ENCODE measurements at regions of chr10 and their contacts with region 1.

Region 1: DNA sequence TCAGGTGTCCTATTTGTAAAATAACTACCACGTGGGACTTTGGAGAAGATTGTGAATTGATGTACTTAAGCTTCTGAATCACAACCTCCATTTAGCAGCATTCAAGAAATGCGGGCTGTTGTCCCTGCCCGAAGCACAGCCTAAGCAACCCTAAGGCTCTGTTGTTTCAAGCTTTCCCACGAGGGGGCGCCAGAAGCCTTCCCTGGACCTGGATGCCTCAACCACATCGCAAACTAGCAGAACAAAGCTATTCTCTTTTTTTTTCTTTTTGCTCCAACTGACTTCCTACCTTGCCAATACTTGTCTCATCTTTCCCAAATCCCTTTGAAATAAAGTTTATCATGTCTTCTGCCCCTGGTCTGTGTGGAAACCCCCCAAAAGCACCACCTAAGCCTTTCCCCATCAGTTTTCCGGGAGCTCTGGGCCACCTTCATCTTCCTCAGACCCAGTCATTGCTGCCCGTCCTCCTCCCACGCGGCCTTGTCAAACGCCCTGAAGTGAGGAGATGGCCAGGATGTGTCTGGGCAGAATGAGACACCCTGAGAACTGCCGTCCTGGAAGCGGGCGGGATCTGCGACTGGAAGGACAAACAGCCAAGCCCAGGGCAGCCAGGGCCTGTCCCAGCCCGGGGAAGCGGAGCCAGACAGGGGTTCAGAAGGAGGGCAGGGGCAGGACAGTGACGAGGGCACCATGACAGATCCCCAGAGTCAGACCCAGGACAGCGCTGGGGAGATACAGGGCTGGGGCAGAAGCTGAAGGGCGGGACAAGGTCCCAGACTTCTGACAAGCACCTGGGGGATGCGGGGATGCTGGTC is 112.7 kb downstream of the SLIT1 start:
- DNase-seq: peak; percentile 65
- H3K4me3 Mint-ChIP-seq: no peak overlapping the region
- H3K27ac Mint-ChIP-seq: no peak overlapping the region
- H3K4me1 Mint-ChIP-seq: peaks cover 6% of the 10 kb centered on the region
- H3K27me3 Mint-ChIP-seq: peaks cover 11% of the 10 kb centered on the region

Region 2: DNA sequence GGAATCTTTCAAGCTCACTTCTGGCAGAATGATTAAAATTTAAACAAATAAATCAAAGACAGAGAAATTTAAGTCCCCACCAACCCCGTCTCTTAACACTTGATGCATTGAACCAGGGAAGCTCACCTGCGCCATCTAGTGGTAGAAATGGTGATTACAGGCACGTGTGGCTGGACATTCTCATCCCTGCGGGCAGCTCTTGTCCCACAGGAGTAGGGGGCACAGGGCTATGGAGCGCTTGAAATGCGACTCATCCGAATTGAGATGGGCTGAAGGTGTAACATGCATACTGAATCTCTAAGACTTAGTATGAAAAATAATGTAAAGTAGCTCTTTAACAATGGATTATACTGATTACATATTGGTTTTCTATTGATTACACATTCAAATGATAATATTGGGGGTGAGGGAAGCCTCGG is 137.5 kb after region 1 on chr10:
- intact Hi-C with region 1: loop called (anchors 2 kb)
- DNase-seq: peak; percentile 41
- H3K4me3 Mint-ChIP-seq: no peak overlapping the region
- H3K27ac Mint-ChIP-seq: no peak overlapping the region
- H3K4me1 Mint-ChIP-seq: no peaks in the 10 kb centered on the region
- H3K27me3 Mint-ChIP-seq: no peaks in the 10 kb centered on the region

Region 3: DNA sequence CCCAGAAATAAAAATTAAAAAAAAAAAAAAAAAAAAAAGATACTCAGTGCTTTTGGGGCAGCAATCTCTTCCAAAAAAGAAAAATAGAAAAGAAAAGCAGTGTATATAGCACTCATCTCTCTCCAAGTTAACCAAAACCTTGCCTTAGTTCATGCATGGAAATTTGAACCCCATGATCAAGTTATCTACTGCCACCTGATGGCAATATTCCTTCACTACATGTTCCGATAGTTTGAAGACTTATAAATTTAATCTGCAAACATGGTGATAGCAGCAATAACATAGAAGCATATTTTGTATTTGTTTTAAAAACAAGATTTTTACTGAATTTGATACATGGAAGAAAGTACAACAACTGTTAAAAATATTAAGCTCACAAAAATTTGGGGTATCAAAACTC is 161.3 kb after region 1 on chr10:
- intact Hi-C with region 1: loop called (anchors 1 kb)
- DNase-seq: no peak
- H3K4me3 Mint-ChIP-seq: no peak overlapping the region
- H3K27ac Mint-ChIP-seq: no peak overlapping the region
- H3K4me1 Mint-ChIP-seq: peaks cover 15% of the 10 kb centered on the region
- H3K27me3 Mint-ChIP-seq: no peaks in the 10 kb centered on the region

Measured in activated T-helper 2 cell treated with anti-CD3 and anti-CD28 coated beads, Interferon-gamma antibody, Interleukin-2, Interleukin-4, amounts not matched to agents 10 μg/mL and 5 μg/mL and 100 μg/mL, durations not matched to agents 14 hours and 24 hours and 36 hours (primary cell).